ENCODE measurements at regions of chr20 and their contacts with region 1.

Region 1: DNA sequence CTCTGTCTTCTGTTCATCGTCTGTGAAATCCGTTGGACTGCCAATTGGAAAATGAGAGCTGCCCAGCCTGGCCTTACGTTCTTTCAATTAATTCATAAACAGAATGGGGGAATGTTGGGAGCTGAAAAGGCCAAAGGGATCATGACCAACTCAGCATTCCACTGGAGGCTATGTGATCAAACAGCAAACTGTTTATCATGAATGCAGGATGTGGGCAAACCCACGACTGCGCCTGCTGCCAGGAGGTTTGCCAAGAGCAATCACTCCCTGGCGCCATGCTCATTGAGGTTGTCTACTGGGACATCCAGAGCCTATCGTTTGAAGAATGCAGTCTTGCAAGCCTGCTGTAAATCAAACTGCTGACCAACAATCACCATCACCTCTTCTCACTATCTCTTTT is 9.3 kb upstream of the FKBP1A start:
- DNase-seq: no peak
- ATAC-seq: peak; percentile 55; the same call in 1 of the 2 replicates
- H3K4me3 ChIP-seq: no peak overlapping the region
- H3K27ac ChIP-seq: peak overlapping the region; percentile 84
- H3K4me1 ChIP-seq: peaks cover 38% of the 10 kb centered on the region
- H3K27me3 ChIP-seq: no peaks in the 10 kb centered on the region
- CTCF ChIP-seq: no peak

Region 2: DNA sequence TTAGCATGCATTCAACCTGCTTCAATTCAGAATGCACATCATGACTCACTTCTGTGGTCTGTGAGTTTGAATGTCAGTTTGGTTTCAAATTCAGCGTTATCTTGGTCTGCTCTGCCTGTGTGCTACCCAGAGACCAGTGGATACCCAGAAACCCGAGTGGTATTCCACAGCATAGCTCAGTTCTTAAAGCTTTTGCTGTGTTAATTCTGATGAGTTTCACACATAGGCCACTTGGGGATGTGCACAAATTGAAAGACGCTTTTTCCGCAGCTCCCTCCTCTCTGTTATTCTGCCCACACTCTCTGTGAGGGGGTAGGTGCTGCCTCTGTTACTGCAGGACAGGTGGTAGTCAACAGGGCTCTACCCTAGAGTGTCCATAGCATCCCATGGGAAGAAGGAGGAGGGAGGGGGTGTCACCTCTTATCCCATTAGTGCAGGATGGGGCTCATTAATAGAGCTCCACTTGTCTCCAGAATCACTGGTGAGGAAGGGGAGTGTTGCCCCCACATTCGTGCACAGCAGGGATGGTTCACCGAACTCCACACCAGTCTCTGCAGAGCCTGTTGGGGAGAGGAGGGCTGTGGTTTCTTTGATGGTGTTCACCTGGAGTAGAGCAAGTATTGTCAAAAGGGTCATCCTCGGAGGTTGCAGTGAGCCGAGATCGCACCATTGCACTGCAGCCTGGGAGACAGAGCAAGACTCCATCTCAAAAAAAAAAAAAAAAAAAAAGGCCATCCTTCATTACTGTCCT is 44.1 kb before region 1 on chr20:
- CTCF ChIA-PET with region 1: no interaction called
- POLR2A ChIA-PET with region 1: interaction called, 15 read pairs
- in situ Hi-C with region 1: no loop called
- intact Hi-C with region 1: no loop called
- DNase-seq: no peak
- ATAC-seq: no peak
- H3K4me3 ChIP-seq: no peak overlapping the region
- H3K27ac ChIP-seq: no peak overlapping the region
- H3K4me1 ChIP-seq: no peaks in the 10 kb centered on the region
- H3K27me3 ChIP-seq: no peaks in the 10 kb centered on the region
- CTCF ChIP-seq: no peak

Region 3: GRCh38 chr20:1938464-1939269 is 536.5 kb after region 1 on chr20:
- CTCF ChIA-PET with region 1: no interaction called
- POLR2A ChIA-PET with region 1: interaction called, 12 read pairs
- in situ Hi-C with region 1: no loop called
- intact Hi-C with region 1: no loop called
- DNase-seq: no peak
- ATAC-seq: no peak
- H3K4me3 ChIP-seq: no peak overlapping the region
- H3K27ac ChIP-seq: no peak overlapping the region
- H3K4me1 ChIP-seq: no peaks in the 10 kb centered on the region
- H3K27me3 ChIP-seq: peaks cover 2% of the 10 kb centered on the region
- CTCF ChIP-seq: no peak

Region 4: DNA sequence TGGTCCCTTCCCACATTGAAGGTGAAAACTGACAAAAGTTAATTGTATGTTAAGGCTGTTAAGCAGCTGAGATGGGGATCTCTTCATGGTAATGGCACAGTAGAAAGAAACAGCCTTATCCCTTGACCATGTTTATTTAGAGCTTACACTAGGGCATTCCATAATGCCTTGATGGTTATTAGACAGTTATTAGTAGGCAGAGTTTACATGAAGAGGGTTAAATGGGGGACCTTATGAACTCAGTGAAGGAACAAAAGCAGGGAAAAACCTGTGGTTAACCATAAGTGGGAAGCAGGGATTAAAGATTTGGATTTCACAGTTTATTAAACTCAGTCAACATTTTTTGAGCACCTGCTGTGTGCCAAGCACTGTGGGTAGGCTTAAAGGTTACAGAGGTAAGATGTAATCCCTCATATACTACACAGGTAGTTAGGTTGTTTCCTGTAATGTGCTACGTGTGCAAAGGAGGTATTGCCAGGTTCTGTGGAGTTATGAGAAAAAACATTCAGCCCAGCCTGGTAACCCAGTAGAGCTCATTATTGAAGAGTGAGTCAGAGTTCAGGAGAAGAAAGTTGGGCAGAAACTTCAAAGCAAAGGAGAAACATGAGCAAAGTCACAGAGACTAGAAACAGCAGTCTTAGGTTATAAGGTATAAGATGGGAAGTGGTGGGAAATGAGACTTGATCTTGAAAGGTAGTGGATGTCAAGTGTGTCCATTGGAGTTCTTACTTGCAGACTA is 1609.0 kb after region 1 on chr20:
- CTCF ChIA-PET with region 1: no interaction called
- POLR2A ChIA-PET with region 1: no interaction called
- in situ Hi-C with region 1: no loop called
- intact Hi-C with region 1: no loop called
- DNase-seq: no peak
- ATAC-seq: no peak
- H3K4me3 ChIP-seq: no peak overlapping the region
- H3K27ac ChIP-seq: no peak overlapping the region
- H3K4me1 ChIP-seq: no peaks in the 10 kb centered on the region
- H3K27me3 ChIP-seq: no peaks in the 10 kb centered on the region
- CTCF ChIP-seq: no peak